Endothelial cell of umbilical vein (primary cell): ENCODE measurements at regions of chr6 and their contacts with region 1.

Region 1: DNA sequence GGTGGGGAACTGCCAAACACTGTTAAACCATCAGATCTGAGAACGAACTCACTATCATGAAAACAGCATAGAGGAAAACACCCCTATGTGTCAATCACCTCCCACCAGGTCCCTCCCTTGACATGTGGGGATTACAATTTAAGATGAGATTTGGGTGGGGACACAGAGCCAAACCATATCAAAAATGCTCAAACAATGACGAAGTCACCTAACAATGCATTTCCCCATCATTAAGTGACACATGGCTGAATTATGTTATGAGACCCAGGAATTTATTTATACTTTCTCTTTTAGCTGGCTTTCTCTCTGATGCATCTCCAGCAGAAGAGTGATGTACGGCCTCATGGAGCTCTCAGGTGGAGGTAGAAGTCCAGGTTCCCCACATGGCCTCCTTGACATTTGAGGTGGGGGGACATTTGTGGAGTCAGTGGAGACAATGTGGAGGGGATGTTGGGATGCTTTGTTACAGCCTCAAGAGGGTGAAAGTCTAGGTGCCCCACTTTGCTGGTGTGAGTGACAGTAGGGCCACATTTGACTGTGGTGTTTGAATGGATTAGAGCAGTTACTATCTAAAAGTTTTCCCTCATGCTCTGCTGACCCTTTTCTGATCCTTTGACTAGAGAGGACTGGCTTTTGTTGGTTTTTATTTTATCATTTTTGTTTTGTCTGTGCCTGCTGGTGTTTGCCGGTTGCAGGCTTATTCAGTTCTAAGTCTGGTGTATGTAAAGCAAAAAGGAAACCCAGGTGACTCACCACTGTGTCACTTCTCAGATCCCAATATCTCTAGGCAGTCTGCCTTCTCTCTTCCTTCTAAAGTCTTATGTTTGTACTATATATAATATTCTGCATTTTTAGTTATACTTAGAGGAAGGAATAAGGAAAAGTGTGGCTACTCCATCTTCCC is 18.5 kb upstream of the DCBLD1 start:
- DNase-seq: peak; percentile 69
- H3K4me3 ChIP-seq: peak overlapping the region in 1 of 3 experiments; percentile 1
- H3K27ac ChIP-seq: peak overlapping the region; percentile 81
- H3K4me1 ChIP-seq: peaks cover 25% of the 10 kb centered on the region
- H3K27me3 ChIP-seq: no peaks in the 10 kb centered on the region
- CTCF ChIP-seq: no peak
- POLR2A ChIP-seq: no peak

Region 2: GRCh38 chr6:117432273-117432672 is 31.7 kb before region 1 on chr6:
- CTCF ChIA-PET with region 1: no interaction called
- POLR2A ChIA-PET with region 1: no interaction called
- dilution Hi-C with region 1: no loop called
- intact Hi-C with region 1: no loop called
- DNase-seq: no peak
- H3K4me3 ChIP-seq: no peak overlapping the region
- H3K27ac ChIP-seq: no peak overlapping the region
- H3K4me1 ChIP-seq: no peaks in the 10 kb centered on the region
- H3K27me3 ChIP-seq: peaks cover 2 to 10% of the 10 kb centered on the region in 2 experiments
- CTCF ChIP-seq: no peak
- POLR2A ChIP-seq: no peak

Region 3: DNA sequence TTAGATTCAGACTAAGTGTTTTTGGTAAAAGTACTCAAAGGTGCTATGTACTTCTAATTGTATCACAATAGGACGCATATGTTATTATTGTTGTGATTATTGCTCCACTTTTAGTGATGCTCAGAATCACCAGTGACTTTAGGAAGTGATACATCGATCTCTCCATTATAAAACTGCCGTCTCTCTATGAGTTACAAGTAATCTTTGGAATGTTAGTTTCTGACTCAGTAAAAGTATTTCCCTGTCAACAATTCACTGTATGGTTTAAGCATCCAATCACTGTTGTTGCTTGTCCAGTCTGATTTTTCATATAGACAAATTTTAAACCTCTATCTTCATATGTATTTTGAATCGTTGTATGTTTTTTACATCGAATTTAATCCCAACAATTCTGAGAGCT is 27.9 kb after region 1 on chr6:
- CTCF ChIA-PET with region 1: interaction called, 3 read pairs
- POLR2A ChIA-PET with region 1: no interaction called
- dilution Hi-C with region 1: no loop called
- intact Hi-C with region 1: loop called (anchors 1 kb)
- DNase-seq: peak; percentile 87
- H3K4me3 ChIP-seq: peak overlapping the region in 1 of 3 experiments; percentile 18
- H3K27ac ChIP-seq: peak overlapping the region; percentile 99
- H3K4me1 ChIP-seq: peaks cover 64% of the 10 kb centered on the region
- H3K27me3 ChIP-seq: no peaks in the 10 kb centered on the region
- CTCF ChIP-seq: no peak
- POLR2A ChIP-seq: peak; percentile 31